CD4-positive, alpha-beta memory T cell (primary cell): ENCODE measurements at regions of chr4 and their contacts with region 1.

Region 1: GRCh38 chr4:6695660-6696630 is 2.3 kb downstream of the S100P start:
- DNase-seq: peak; percentile 78 to 89 (median 81)
- H3K4me3 ChIP-seq: no peak overlapping the region
- H3K4me3 Mint-ChIP-seq: peak overlapping the region; percentile 33 to 85 (median 71)
- H3K27ac ChIP-seq: peak overlapping the region; percentile 81
- H3K27ac Mint-ChIP-seq: peak overlapping the region; percentile 89 to 96 (median 92)
- H3K4me1 ChIP-seq: peaks cover 98% of the 10 kb centered on the region
- H3K4me1 Mint-ChIP-seq: peaks cover 59 to 92% (median 78%) of the 10 kb centered on the region in 4 donors
- H3K27me3 ChIP-seq: no peaks in the 10 kb centered on the region
- H3K27me3 Mint-ChIP-seq: no peaks in the 10 kb centered on the region

Region 2: DNA sequence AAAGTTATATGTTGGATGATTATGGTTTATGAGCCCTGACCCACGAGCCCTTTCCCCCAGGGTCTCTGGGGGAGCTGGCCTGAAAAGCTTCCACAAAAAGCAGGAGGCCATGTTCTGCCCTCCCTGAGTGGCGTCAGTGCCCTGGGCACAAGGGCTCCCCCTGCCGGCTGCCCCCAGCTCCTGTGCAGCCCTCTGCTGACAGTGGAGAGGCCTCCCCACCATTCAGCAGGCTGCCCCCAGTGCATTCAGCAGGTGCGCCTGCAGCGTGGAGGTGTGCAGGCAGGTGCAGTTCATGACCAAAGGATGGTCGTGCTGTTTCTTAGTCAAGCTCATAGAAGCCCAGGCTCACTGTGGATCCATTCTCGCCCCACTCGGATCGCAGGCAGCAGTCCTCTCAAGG is 14.8 kb before region 1 on chr4:
- CTCF ChIA-PET with region 1: interaction called, 189 read pairs
- POLR2A ChIA-PET with region 1: interaction called, 1,401 read pairs
- intact Hi-C with region 1: no loop called
- DNase-seq: no peak
- H3K4me3 ChIP-seq: no peak overlapping the region
- H3K4me3 Mint-ChIP-seq: no peak overlapping the region
- H3K27ac ChIP-seq: no peak overlapping the region
- H3K27ac Mint-ChIP-seq: peak overlapping the region in 2 of 7 donors; percentile 22 to 35
- H3K4me1 ChIP-seq: peaks cover 21% of the 10 kb centered on the region
- H3K4me1 Mint-ChIP-seq: peaks cover 38 to 77% (median 46%) of the 10 kb centered on the region in 4 donors
- H3K27me3 ChIP-seq: no peaks in the 10 kb centered on the region
- H3K27me3 Mint-ChIP-seq: no peaks in the 10 kb centered on the region

Region 3: GRCh38 chr4:7042697-7043464 is 346.9 kb after region 1 on chr4 and contains the start of gene TADA2B:
- CTCF ChIA-PET with region 1: no interaction called
- POLR2A ChIA-PET with region 1: interaction called, 11 read pairs
- intact Hi-C with region 1: no loop called
- DNase-seq: peak; percentile 90 to 94 (median 91)
- H3K4me3 ChIP-seq: peak within 1 kb of the TSS; percentile 83 to 91
- H3K4me3 Mint-ChIP-seq: peak within 1 kb of the TSS; percentile 89 to 97 (median 93)
- H3K27ac ChIP-seq: peak within 1 kb of the TSS; percentile 75
- H3K27ac Mint-ChIP-seq: peak within 1 kb of the TSS; percentile 81 to 95 (median 91)
- H3K4me1 ChIP-seq: peaks cover 45% of the 10 kb centered on the region
- H3K4me1 Mint-ChIP-seq: peaks cover 33 to 61% (median 40%) of the 10 kb centered on the region in 4 donors
- H3K27me3 ChIP-seq: no peaks in the 10 kb centered on the region
- H3K27me3 Mint-ChIP-seq: no peaks in the 10 kb centered on the region
- total RNA-seq, gene TADA2B: 46.4 to 49.0 TPM